ENCODE measurements at regions of chr17 and their contacts with region 1.

Region 1: DNA sequence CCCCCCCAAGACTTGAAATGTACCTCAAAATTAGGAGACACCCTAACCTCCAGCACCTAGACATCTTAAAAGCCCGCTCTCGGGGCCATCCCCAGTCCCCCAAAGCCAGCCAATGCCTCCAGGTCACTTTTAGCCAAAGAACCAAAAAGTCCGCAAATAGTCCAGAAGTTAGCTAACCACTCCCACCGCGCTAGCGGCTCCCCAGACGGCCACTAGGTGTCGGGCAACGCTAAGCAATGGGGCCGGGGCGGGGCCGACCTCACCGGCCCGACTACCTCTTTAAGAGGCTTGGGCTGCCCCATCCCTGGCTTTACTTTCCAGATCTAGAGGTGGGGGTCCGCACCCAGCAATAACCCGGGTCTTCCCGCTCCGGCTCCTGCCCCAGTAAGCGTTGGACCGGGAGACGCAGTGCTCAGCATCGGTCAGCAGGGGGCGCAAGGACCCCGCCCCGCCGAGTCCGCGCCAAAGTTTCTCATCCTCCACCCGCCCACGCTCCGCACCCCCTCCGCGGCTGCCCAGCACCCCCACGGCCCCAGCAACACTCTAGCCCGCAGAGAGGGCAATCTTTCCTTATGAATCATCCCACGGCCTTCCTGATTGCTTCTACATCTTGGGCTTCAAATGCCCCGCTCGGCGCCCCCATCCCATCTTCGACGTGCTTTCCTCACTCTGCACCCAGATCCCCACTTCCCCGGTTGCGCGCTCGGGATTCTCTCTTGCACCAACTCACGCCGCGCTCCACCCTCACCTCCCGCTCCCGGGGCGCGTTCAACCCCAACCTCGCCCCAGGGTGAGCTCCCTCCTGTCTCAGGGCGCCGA is 765 bp downstream of the COL1A1 start:
- DNase-seq: peak; percentile 84 to 93 (median 86)
- H3K4me3 ChIP-seq: peak overlapping the region in 3 of 4 donors; percentile 17 to 63 (median 24)
- H3K27ac ChIP-seq: peak overlapping the region in 4 of 5 donors; percentile 10 to 88 (median 62)
- H3K4me1 ChIP-seq: peaks cover 3 to 8% of the 10 kb centered on the region in 2 donors
- H3K27me3 ChIP-seq: peaks cover 21% of the 10 kb centered on the region
- CTCF ChIP-seq: peak; percentile 97 to 100 (median 100)
- POLR2A ChIP-seq: peak in 1 of 2 donors; percentile 37

Region 2: DNA sequence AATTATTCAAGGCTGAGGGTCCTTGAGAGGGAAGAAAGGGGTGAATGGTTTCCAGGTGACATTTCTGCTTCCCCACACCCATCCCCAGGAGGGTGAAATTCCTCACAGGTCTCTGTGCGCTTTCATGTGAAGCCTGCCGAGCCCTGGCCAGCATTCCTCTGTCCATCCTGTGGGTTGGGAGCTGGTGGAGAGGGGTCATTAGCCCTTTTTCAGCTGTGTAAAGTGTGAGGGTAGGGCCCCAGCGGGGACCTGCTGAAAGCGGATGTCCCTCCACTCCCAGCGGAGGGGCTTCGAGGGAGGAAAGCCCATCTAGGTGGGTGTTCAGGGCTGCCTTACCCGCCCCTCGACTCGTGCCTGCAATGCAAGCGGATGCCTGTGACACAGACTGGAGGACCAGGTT is 285.0 kb before region 1 on chr17:
- intact Hi-C with region 1: no loop called
- DNase-seq: no peak
- H3K4me3 ChIP-seq: no peak overlapping the region
- H3K27ac ChIP-seq: no peak overlapping the region
- H3K4me1 ChIP-seq: peaks cover 0 to under 1% of the 10 kb centered on the region in 2 donors
- H3K27me3 ChIP-seq: peaks cover 14% of the 10 kb centered on the region
- CTCF ChIP-seq: no peak
- POLR2A ChIP-seq: no peak

Region 3: GRCh38 chr17:50161023-50161910 is 39.4 kb before region 1 on chr17:
- intact Hi-C with region 1: no loop called
- DNase-seq: peak; percentile 88 to 95 (median 91)
- H3K4me3 ChIP-seq: peak overlapping the region in 2 of 4 donors; percentile 27 to 66
- H3K27ac ChIP-seq: peak overlapping the region in 2 of 5 donors; percentile 59 to 70
- H3K4me1 ChIP-seq: peaks cover 0 to 13% of the 10 kb centered on the region in 2 donors
- H3K27me3 ChIP-seq: no peaks in the 10 kb centered on the region
- CTCF ChIP-seq: peak; percentile 82 to 98 (median 93)
- POLR2A ChIP-seq: no peak

Region 4: DNA sequence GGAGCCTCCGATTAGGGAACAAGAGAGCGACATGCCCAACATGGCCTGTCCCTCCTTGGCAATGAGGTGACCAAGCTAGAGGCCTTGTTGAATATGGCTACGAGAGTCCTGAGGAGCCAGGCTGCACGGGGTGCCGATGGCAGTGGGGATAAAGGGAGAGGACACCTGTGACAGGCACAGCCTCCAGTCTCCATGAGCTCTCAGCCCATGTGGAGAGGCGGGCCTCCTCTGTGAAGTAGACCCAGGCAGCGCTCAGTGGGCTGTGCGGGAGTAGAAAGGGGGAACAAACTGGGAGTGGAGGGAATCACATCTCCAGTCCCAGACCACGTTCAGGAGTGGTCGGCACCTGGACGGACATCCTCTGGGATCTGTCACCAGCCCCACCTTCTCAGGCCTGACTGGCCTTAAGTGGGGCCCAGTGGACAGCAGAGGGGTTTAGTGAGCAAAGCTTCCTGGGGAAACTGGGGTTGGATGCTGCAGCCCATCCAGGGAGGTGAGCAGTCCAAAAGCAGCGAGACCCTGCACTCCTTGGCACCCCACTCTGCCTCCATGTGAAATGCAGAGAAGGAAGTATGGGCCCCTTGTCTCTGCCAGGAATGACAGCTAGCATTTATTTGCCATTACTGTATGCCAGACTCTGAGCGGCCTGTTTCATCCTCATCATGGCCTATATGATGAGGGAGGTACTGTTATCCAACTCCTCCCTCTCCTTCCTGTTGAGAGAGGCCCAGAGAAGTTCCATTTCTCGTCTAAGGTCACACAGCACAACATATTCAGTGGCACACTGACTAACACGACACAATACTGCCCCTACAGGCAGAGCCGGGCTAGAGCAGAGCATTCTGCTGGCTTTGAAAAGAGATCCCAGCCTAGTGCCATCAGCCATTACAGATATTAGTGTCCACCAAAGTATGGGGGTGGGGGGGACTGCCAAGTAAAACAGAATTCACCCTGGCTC is 69.1 kb after region 1 on chr17:
- intact Hi-C with region 1: loop called (anchors 2 kb)
- DNase-seq: peak; percentile 47 to 87 (median 77)
- H3K4me3 ChIP-seq: no peak overlapping the region
- H3K27ac ChIP-seq: peak overlapping the region in 2 of 5 donors; percentile 53 to 74
- H3K4me1 ChIP-seq: no peaks in the 10 kb centered on the region
- H3K27me3 ChIP-seq: peaks cover 4% of the 10 kb centered on the region
- CTCF ChIP-seq: peak; percentile 51 to 73 (median 68)
- POLR2A ChIP-seq: no peak

Region 5: DNA sequence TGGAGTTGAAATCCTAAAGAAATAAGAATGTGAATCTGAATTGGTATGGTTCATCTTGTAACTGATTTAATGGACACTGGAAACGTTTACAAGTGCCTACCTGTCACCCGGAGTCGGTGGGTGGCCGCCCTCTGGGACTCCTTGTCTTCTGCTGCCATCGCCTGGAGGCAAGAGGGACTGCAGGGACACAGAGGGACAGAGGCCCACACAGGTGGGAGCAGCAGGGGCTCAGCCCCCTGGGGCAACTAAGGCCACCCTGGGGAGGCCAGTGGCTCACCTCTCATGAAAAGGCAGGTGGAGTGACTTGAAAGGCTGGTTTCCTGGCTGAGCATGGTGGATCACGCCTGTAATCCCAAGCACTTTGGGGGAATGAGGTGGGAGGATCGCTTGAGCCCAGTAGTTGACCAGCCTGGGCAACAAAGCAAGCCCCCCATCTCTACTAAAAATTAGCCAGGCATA is 96.8 kb after region 1 on chr17:
- intact Hi-C with region 1: loop called (anchors 2 to 5 kb)
- DNase-seq: peak; percentile 71 to 86 (median 83)
- H3K4me3 ChIP-seq: no peak overlapping the region
- H3K27ac ChIP-seq: no peak overlapping the region
- H3K4me1 ChIP-seq: no peaks in the 10 kb centered on the region
- H3K27me3 ChIP-seq: no peaks in the 10 kb centered on the region
- CTCF ChIP-seq: peak; percentile 74 to 98 (median 94)
- POLR2A ChIP-seq: no peak

Measured in adrenal gland (tissue), 19 donors.